ENCODE measurements at regions of chr13 and their contacts with region 1.

Region 1: GRCh38 chr13:20160847-20161274 is at the start of gene GJA3:
- DNase-seq: no peak
- ATAC-seq: peak; percentile 92
- H3K4me3 ChIP-seq: peak within 1 kb of the TSS; percentile 61 to 76
- H3K27ac ChIP-seq: peak within 1 kb of the TSS; percentile 71
- H3K4me1 ChIP-seq: peaks cover 7% of the 10 kb centered on the region; the same call in 1 of the 2 replicates
- H3K27me3 ChIP-seq: no peaks in the 10 kb centered on the region
- CTCF ChIP-seq: no peak
- total RNA-seq, gene GJA3: 11.6 TPM

Region 2: GRCh38 chr13:19927117-19927748 is 233.6 kb before region 1 on chr13:
- CTCF ChIA-PET with region 1: no interaction called
- POLR2A ChIA-PET with region 1: no interaction called
- in situ Hi-C with region 1: no loop called
- intact Hi-C with region 1: loop called (anchors 5 kb)
- DNase-seq: peak; percentile 27
- ATAC-seq: peak; percentile 80; the same call in 1 of the 2 replicates
- H3K4me3 ChIP-seq: no peak overlapping the region
- H3K27ac ChIP-seq: no peak overlapping the region
- H3K4me1 ChIP-seq: no peaks in the 10 kb centered on the region
- H3K27me3 ChIP-seq: no peaks in the 10 kb centered on the region
- CTCF ChIP-seq: peak; percentile 67; the same call in 1 of the 2 replicates

Region 3: DNA sequence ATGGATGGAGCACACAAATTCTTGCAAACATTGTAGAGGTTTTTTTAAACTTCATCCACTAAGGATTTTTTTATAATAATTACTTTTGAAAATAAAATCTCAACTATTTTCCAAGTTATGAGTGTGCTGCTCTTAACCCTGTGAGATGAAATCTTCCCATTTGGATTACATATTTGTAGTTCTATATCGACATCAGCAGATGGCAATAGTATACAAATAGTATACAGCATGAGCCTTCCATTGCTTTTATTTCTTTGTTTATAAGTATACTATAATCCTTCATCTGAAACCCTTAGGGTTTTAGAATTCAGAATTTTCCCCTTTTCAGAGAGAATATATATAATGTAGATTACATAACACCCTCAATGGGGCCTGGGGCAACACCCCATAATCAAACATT is 70.5 kb before region 1 on chr13:
- CTCF ChIA-PET with region 1: no interaction called
- POLR2A ChIA-PET with region 1: no interaction called
- in situ Hi-C with region 1: no loop called
- intact Hi-C with region 1: loop called (anchors 2 kb)
- DNase-seq: no peak
- ATAC-seq: no peak
- H3K4me3 ChIP-seq: no peak overlapping the region
- H3K27ac ChIP-seq: no peak overlapping the region
- H3K4me1 ChIP-seq: no peaks in the 10 kb centered on the region
- H3K27me3 ChIP-seq: no peaks in the 10 kb centered on the region
- CTCF ChIP-seq: peak; percentile 13; the same call in 1 of the 2 replicates

Region 4: GRCh38 chr13:20127577-20128466 is 33.0 kb before region 1 on chr13:
- CTCF ChIA-PET with region 1: no interaction called
- POLR2A ChIA-PET with region 1: interaction called, 9 read pairs
- in situ Hi-C with region 1: no loop called
- intact Hi-C with region 1: loop called (anchors 5 kb)
- DNase-seq: no peak
- ATAC-seq: peak; percentile 93
- H3K4me3 ChIP-seq: peak overlapping the region; percentile 48 to 64
- H3K27ac ChIP-seq: peak overlapping the region; percentile 75
- H3K4me1 ChIP-seq: peaks cover 16% of the 10 kb centered on the region
- H3K27me3 ChIP-seq: no peaks in the 10 kb centered on the region
- CTCF ChIP-seq: peak; percentile 68

Measured in Panc1 (cell line).